HCT116 (cell line): ENCODE measurements at regions of chr1 and their contacts with region 1.

Region 1: GRCh38 chr1:170831276-170831675 is 104.1 kb upstream of the MROH9 start:
- DNase-seq: no peak
- ATAC-seq: no peak
- H3K4me3 ChIP-seq: no peak overlapping the region
- H3K27ac ChIP-seq: no peak overlapping the region
- H3K4me1 ChIP-seq: no peaks in the 10 kb centered on the region
- H3K27me3 ChIP-seq: no peaks in the 10 kb centered on the region
- CTCF ChIP-seq: no peak
- POLR2A ChIP-seq: no peak
- RAD21 ChIP-seq: no peak

Region 2: GRCh38 chr1:170819781-170820180 is 11.5 kb before region 1 on chr1:
- CTCF ChIA-PET with region 1: no interaction called
- POLR2A ChIA-PET with region 1: no interaction called
- RAD21 ChIA-PET with region 1: no interaction called
- intact Hi-C with region 1: loop called (anchors 1 kb)
- DNase-seq: no peak
- ATAC-seq: no peak
- H3K4me3 ChIP-seq: no peak overlapping the region
- H3K27ac ChIP-seq: no peak overlapping the region
- H3K4me1 ChIP-seq: no peaks in the 10 kb centered on the region
- H3K27me3 ChIP-seq: no peaks in the 10 kb centered on the region
- CTCF ChIP-seq: no peak
- POLR2A ChIP-seq: no peak
- RAD21 ChIP-seq: no peak

Region 3: DNA sequence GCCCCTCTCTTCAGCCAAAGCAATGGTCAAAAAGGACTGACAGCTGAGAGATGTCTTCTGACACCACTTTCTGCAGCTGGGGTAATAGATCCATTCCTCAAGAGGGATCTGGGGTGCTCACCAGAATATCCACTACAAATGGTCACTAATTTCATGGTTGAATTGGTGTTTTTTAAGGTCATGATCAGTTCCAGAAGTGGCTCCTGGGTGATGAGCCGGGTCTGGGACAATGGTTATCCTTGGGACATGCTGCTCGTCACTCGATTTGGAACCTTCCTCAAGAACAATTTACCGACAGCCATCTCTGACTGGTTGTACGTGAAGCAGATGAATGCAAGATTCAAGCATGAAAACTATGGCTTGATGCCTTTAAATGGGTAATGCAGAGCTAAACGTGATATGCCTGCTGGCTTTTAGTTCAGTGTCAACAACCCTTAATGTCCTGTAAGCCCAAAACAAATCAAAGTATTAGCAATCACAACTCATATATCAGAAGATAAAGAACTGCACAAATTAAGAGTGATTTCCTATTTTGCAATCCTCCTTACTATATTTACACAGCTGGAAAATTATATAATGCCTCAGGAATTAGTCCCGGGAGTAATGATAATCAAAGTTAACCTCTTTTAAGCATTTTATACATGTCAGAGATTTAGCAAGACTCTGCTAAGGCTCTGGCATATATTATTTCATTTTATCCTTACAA is 279.5 kb after region 1 on chr1:
- CTCF ChIA-PET with region 1: no interaction called
- POLR2A ChIA-PET with region 1: no interaction called
- RAD21 ChIA-PET with region 1: no interaction called
- intact Hi-C with region 1: no loop called
- DNase-seq: no peak
- ATAC-seq: no peak
- H3K4me3 ChIP-seq: no peak overlapping the region
- H3K27ac ChIP-seq: no peak overlapping the region
- H3K4me1 ChIP-seq: no peaks in the 10 kb centered on the region
- H3K27me3 ChIP-seq: peaks cover 9% of the 10 kb centered on the region; the same call in 1 of the 2 replicates
- CTCF ChIP-seq: no peak
- POLR2A ChIP-seq: no peak
- RAD21 ChIP-seq: no peak